ENCODE measurements at regions of chr5 and their contacts with region 1.

Region 1: DNA sequence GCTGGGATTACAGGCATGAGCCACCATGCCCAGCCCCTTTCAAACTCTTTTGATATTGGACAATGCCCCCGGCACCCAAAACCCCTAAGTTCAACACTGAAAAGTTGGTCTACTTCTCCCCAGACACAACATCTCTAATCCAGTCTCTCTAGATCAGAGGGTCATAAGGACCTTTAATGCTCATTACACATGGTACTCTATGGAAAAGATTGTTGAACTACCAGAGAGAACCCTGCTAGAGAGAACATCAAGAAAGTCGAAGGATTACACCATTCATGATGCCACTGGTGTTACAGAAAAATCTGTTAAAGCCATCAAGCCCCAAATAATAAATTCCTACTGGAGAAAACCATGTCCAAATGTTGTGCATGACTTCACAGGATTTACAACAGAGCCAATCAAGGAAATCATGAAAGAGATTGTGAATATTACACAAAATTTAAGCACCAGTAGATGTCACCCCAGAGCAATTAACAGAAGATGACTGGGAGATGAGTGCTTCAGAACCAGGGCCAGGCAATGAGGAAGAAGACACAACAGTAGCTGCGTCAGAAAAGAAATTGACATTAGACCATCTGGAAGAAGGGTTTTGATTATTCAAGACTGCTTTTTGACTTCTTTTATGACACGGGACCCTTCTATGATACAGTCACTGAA is 28.3 kb upstream of the NIPAL4 start:
- DNase-seq: no peak
- H3K4me3 ChIP-seq: no peak overlapping the region
- H3K27ac ChIP-seq: peak overlapping the region in 2 of 4 donors; percentile 8 to 24
- H3K4me1 ChIP-seq: peaks cover 0 to 11% (median 3%) of the 10 kb centered on the region in 4 donors
- H3K27me3 ChIP-seq: no peaks in the 10 kb centered on the region
- CTCF ChIP-seq: peak; percentile 53 to 70 (median 58)
- EP300 ChIP-seq: no peak
- POLR2A ChIP-seq: no peak

Region 2: GRCh38 chr5:157328277-157328912 is 103.3 kb before region 1 on chr5:
- intact Hi-C with region 1: loop called (anchors 5 kb)
- DNase-seq: no peak
- H3K4me3 ChIP-seq: peak overlapping the region; percentile 22 to 30 (median 30)
- H3K27ac ChIP-seq: no peak overlapping the region
- H3K4me1 ChIP-seq: peaks cover 0 to 5% (median 4%) of the 10 kb centered on the region in 4 donors
- H3K27me3 ChIP-seq: no peaks in the 10 kb centered on the region
- CTCF ChIP-seq: peak; percentile 86 to 95 (median 88)
- EP300 ChIP-seq: no peak
- POLR2A ChIP-seq: no peak

Region 3: GRCh38 chr5:157476702-157477408 is 45.2 kb after region 1 on chr5:
- intact Hi-C with region 1: loop called (anchors 2 kb)
- DNase-seq: no peak
- H3K4me3 ChIP-seq: no peak overlapping the region
- H3K27ac ChIP-seq: peak overlapping the region; percentile 60 to 84 (median 77)
- H3K4me1 ChIP-seq: peaks cover 10 to 64% (median 55%) of the 10 kb centered on the region in 4 donors
- H3K27me3 ChIP-seq: peaks cover 0 to 3% (median 0%) of the 10 kb centered on the region in 4 donors
- CTCF ChIP-seq: peak; percentile 73 to 82 (median 79)
- EP300 ChIP-seq: no peak
- POLR2A ChIP-seq: no peak